ENCODE measurements at regions of chr13 and their contacts with region 1.

Region 1: GRCh38 chr13:38824342-38824741 is 137.5 kb downstream of the FREM2 start:
- DNase-seq: peak; percentile 36
- ATAC-seq: peak; percentile 91
- H3K4me3 ChIP-seq: no peak overlapping the region
- H3K27ac ChIP-seq: no peak overlapping the region
- H3K4me1 ChIP-seq: no peaks in the 10 kb centered on the region
- H3K27me3 ChIP-seq: no peaks in the 10 kb centered on the region
- CTCF ChIP-seq: no peak; a peak in 1 of 6 replicates
- EP300 ChIP-seq: no peak
- POLR2A ChIP-seq: no peak
- RAD21 ChIP-seq: peak; percentile 26; the same call in 1 of the 2 replicates

Region 2: GRCh38 chr13:37797631-37798030 is 1026.7 kb before region 1 on chr13:
- CTCF ChIA-PET with region 1: no interaction called
- POLR2A ChIA-PET with region 1: no interaction called
- RAD21 ChIA-PET with region 1: no interaction called
- SMC1A ChIA-PET with region 1: no interaction called
- in situ Hi-C with region 1: no loop called
- intact Hi-C with region 1: no loop called
- DNase-seq: no peak
- ATAC-seq: no peak
- H3K4me3 ChIP-seq: no peak overlapping the region
- H3K27ac ChIP-seq: no peak overlapping the region
- H3K4me1 ChIP-seq: no peaks in the 10 kb centered on the region
- H3K27me3 ChIP-seq: no peaks in the 10 kb centered on the region
- CTCF ChIP-seq: no peak
- EP300 ChIP-seq: no peak
- POLR2A ChIP-seq: no peak
- RAD21 ChIP-seq: no peak

Region 3: DNA sequence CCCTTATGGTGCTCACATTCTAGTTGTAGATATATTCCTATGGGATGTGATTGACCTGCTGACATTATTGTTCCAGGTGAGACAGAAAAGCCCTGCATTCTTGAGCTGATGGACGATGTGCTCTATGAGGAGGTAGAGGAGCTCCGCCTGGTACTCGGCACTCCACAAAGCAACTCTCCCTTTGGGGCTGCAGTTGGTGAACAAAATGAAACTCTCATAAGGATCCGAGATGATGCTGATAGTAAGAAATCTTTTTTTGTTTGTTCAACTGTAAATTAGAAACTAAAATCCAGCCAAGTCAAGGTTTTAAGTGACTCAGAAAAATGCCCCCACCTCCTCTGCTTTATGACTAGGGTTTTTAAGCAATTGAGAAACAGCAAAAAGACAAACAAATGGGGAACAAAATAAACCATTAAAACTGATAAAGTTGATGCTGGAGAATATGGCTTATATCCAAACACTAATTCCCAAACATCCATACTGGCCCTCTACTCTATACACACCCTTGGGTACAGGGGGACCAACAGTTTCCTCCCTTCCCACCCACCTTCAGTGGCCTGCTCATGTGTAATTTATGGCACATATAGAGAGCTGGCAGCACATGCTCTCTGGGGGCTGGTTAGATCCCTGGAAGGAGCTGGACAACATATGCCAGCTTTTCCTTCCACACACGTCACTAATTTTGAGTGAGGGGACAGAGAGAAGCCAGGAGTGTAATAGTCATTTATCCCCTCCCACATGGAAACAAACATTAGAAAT is 26.7 kb after region 1 on chr13:
- CTCF ChIA-PET with region 1: interaction called, 4 read pairs
- POLR2A ChIA-PET with region 1: interaction called, 6 read pairs
- RAD21 ChIA-PET with region 1: interaction called, 9 read pairs
- SMC1A ChIA-PET with region 1: interaction called, 10 read pairs
- in situ Hi-C with region 1: no loop called
- intact Hi-C with region 1: no loop called
- DNase-seq: no peak
- ATAC-seq: peak; percentile 92
- H3K4me3 ChIP-seq: no peak overlapping the region
- H3K27ac ChIP-seq: no peak overlapping the region
- H3K4me1 ChIP-seq: no peaks in the 10 kb centered on the region
- H3K27me3 ChIP-seq: no peaks in the 10 kb centered on the region
- CTCF ChIP-seq: no peak
- EP300 ChIP-seq: no peak
- POLR2A ChIP-seq: no peak
- RAD21 ChIP-seq: no peak

Region 4: GRCh38 chr13:38866649-38867048 is 42.3 kb after region 1 on chr13:
- CTCF ChIA-PET with region 1: interaction called, 27 read pairs
- POLR2A ChIA-PET with region 1: interaction called, 8 read pairs
- RAD21 ChIA-PET with region 1: interaction called, 30 read pairs
- SMC1A ChIA-PET with region 1: interaction called, 26 read pairs
- in situ Hi-C with region 1: no loop called
- intact Hi-C with region 1: loop called (anchors 5 kb)
- DNase-seq: no peak
- ATAC-seq: no peak; the same call in 2 of the 3 replicates
- H3K4me3 ChIP-seq: no peak overlapping the region
- H3K27ac ChIP-seq: no peak overlapping the region
- H3K4me1 ChIP-seq: no peaks in the 10 kb centered on the region
- H3K27me3 ChIP-seq: no peaks in the 10 kb centered on the region; a peak in 1 of 4 replicates
- CTCF ChIP-seq: no peak; a peak in 1 of 6 replicates
- EP300 ChIP-seq: no peak
- POLR2A ChIP-seq: no peak
- RAD21 ChIP-seq: no peak; the same call in 1 of the 2 replicates

Region 5: DNA sequence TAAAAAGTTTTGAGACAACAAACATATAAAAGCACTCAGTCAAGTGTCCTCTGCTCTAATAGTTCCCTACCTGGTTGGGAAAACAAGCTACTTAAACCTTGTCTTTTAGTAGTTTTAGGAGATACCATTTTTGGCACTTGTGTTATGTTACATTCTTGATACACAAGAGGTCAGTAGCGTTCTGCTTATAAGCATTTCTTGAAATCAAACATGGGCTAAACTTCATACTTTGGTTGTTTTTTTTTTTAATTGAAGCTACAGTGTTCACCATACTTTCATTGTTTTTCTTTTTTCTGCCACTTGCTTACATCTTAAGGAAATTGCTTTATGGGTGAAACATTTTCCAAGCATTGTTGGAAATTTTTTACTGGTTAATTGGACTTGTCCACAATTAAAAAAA is 226.8 kb after region 1 on chr13:
- CTCF ChIA-PET with region 1: no interaction called
- POLR2A ChIA-PET with region 1: no interaction called
- RAD21 ChIA-PET with region 1: no interaction called
- SMC1A ChIA-PET with region 1: no interaction called
- in situ Hi-C with region 1: no loop called
- intact Hi-C with region 1: no loop called
- DNase-seq: no peak
- ATAC-seq: peak; percentile 54
- H3K4me3 ChIP-seq: no peak overlapping the region
- H3K27ac ChIP-seq: no peak overlapping the region
- H3K4me1 ChIP-seq: no peaks in the 10 kb centered on the region
- H3K27me3 ChIP-seq: no peaks in the 10 kb centered on the region
- CTCF ChIP-seq: peak; percentile 27 to 55 (median 31); a peak in 4 of 6 replicates
- EP300 ChIP-seq: no peak
- POLR2A ChIP-seq: no peak
- RAD21 ChIP-seq: peak; percentile 76

Measured in GM12878 (cell line).